Heart left ventricle (tissue), 16 donors: ENCODE measurements at regions of chr2 and their contacts with region 1.

Region 1: DNA sequence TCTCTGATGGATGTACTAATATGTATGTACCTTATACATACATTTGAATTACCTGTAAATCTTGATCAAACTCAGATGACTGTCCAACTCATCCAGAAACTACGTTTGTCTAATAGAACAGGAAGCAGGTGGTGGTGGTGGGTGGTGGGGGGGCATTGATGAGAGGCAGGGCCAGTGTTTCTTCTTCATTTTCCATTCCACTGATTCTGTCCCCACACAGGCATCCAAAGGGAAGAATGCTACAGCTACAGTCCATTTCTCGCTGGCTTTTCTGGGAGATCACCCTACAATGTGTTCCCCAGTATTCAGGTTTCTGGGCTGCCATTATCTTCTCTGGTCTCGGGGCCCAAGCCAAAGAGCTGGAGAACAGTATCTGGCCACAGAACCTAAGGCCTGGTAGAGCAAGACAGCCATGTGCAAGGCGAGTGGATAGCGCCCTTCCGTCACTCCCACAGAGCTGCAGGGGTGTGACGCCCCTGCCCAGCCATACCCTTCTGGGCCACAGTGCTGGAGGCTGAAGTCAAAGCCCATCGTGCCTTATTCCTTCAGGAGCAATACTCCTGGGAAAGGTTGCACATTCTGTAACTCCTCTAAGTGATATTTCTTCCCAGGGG is 54.5 kb downstream of the BCL11A start:
- DNase-seq: no peak
- ATAC-seq: no peak
- H3K4me3 ChIP-seq: no peak overlapping the region
- H3K27ac ChIP-seq: peak overlapping the region in 2 of 12 donors; percentile 43 to 61
- H3K4me1 ChIP-seq: peaks cover 0 to 50% (median 11%) of the 10 kb centered on the region in 12 donors
- H3K27me3 ChIP-seq: no peaks in the 10 kb centered on the region
- CTCF ChIP-seq: no peak
- POLR2A ChIP-seq: no peak

Region 2: GRCh38 chr2:60446413-60447267 is 52.3 kb before region 1 on chr2:
- intact Hi-C with region 1: loop called in 1 of 10 experiments (anchors 10 kb)
- DNase-seq: no peak
- ATAC-seq: no peak
- H3K4me3 ChIP-seq: no peak overlapping the region
- H3K27ac ChIP-seq: no peak overlapping the region
- H3K4me1 ChIP-seq: peaks cover 0 to 10% (median 0%) of the 10 kb centered on the region in 12 donors
- H3K27me3 ChIP-seq: peaks cover 0 to 2% (median 0%) of the 10 kb centered on the region in 9 donors
- CTCF ChIP-seq: no peak
- POLR2A ChIP-seq: no peak

Region 3: DNA sequence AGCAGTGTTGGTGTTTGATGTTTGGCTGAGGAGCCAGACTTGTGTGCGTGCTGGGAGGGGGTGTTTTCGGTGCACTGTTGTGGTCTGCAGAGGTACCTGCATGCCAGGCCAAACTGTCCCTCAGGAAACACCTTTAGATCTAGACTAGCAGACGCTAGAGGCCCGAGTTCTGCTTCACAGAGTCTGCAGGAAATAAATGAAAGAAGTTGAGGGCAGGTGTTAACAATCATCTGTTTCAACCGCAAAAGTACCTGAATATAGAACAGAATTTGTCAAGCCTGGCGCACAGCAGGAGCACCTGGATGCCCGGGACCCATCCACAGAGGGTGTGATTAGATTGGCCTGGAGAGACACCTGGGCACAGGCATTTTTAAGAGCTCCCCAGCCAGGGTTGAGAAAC is 342.0 kb after region 1 on chr2:
- intact Hi-C with region 1: no loop called
- DNase-seq: no peak
- ATAC-seq: no peak
- H3K4me3 ChIP-seq: no peak overlapping the region
- H3K27ac ChIP-seq: no peak overlapping the region
- H3K4me1 ChIP-seq: no peaks in the 10 kb centered on the region
- H3K27me3 ChIP-seq: no peaks in the 10 kb centered on the region
- CTCF ChIP-seq: no peak
- POLR2A ChIP-seq: no peak

Region 4: GRCh38 chr2:61288070-61288841 is 789.3 kb after region 1 on chr2:
- intact Hi-C with region 1: no loop called
- DNase-seq: no peak
- ATAC-seq: no peak
- H3K4me3 ChIP-seq: no peak overlapping the region
- H3K27ac ChIP-seq: no peak overlapping the region
- H3K4me1 ChIP-seq: no peaks in the 10 kb centered on the region
- H3K27me3 ChIP-seq: no peaks in the 10 kb centered on the region
- CTCF ChIP-seq: no peak
- POLR2A ChIP-seq: no peak